ENCODE measurements at regions of chr12 and their contacts with region 1.

Region 1: DNA sequence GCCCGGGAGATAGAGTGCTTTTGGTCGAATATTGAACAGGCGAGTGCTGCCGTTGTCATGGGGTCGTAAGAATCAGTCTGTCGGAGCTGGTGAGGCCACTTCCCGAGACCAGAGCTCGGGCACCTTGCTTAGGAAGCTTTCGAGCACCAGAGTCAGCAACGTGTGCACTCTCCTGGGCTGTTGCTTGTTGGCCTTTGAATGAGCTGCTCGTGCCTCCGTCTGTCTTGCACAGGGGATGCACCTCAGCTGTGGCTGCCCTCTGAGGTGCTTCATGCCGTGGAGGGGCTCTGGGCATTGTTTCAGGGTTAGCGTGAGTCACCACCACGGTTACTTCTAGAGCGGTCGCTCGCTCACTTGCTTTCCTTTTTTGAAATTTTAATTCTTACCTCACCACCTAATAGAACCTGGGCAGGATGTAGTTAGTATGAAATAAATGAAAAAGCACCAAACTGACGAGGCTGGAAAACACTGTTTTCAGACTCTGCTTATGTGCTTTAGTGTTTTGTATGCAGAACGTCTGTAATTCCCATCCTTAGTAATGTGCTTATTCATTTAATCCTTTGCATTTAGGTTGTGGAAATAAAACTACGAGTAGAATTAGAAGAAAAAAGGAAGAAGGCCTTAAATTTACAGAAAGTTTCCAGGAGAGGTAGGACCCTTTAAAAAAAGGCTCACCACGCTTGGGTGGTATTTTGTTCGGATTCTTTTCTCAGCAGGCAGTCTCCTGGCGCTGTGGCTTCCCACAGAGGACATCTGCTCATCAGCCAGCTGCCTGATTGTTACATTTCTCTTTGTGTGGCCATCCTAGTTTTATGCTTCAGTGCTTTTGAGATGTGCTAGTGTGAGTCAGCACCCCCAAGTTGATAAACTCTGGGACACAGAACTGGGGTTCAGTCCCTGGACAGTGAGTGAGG is 40.6 kb downstream of the EP400 start:
- DNase-seq: no peak
- H3K4me3 ChIP-seq: no peak overlapping the region
- H3K27me3 ChIP-seq: no peaks in the 10 kb centered on the region
- CTCF ChIP-seq: no peak

Region 2: GRCh38 chr12:132000286-132000872 is 10.1 kb after region 1 on chr12:
- CTCF ChIA-PET with region 1: interaction called, 11 read pairs
- POLR2A ChIA-PET with region 1: no interaction called
- DNase-seq: no peak
- H3K4me3 ChIP-seq: no peak overlapping the region
- H3K27me3 ChIP-seq: no peaks in the 10 kb centered on the region
- CTCF ChIP-seq: no peak